MCF 10A (cell line): ENCODE measurements at regions of chr1 and their contacts with region 1.

Region 1: GRCh38 chr1:44652445-44653106 is 21.7 kb downstream of the TMEM53 start:
- DNase-seq: peak; percentile 74
- H3K4me3 Mint-ChIP-seq: no peak overlapping the region
- H3K27ac Mint-ChIP-seq: peak overlapping the region; percentile 43
- H3K4me1 Mint-ChIP-seq: no peaks in the 10 kb centered on the region
- H3K27me3 Mint-ChIP-seq: no peaks in the 10 kb centered on the region
- CTCF ChIP-seq: peak; percentile 97

Region 2: DNA sequence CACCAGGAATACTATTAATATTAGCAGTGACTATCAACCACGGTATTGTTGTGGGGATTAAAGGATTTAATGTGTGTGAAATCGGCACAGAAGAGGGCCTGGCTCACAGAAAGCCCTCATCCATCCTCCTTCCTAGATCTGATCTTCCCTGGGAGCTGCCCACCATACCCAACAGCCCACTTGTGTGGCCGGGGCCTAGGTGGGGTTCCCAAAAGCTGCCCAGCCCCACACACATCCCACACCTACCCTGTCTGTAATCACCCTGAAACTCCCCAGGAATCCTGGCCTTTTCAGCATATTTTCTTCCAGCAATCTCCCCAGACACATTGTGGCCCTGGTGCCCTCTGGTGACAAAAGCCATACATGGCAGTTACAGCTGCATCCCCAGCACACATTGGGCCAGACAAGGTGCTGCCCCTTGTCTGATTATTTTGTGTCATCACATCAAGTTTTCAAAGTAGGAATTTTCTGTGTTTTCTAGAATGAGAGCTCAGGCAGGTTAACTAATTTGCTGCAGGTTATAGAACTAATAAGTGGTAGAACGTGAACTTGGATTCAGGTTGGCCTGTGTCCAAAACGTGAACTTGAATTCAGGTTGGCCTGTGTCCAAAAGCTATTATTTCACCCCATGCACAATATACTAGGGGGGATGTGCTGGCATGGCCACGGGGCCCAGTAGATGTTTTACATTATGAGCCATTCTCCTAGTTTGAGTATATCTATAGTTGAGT is 616.0 kb before region 1 on chr1:
- CTCF ChIA-PET with region 1: interaction called, 16 read pairs
- POLR2A ChIA-PET with region 1: no interaction called
- intact Hi-C with region 1: no loop called
- DNase-seq: peak; percentile 85
- H3K4me3 Mint-ChIP-seq: no peak overlapping the region
- H3K27ac Mint-ChIP-seq: no peak overlapping the region
- H3K4me1 Mint-ChIP-seq: peaks cover 11% of the 10 kb centered on the region
- H3K27me3 Mint-ChIP-seq: no peaks in the 10 kb centered on the region
- CTCF ChIP-seq: peak; percentile 73

Region 3: GRCh38 chr1:44213222-44214112 is 439.1 kb before region 1 on chr1 and contains the start of gene DMAP1:
- CTCF ChIA-PET with region 1: interaction called, 70 read pairs
- POLR2A ChIA-PET with region 1: interaction called, 15 read pairs
- intact Hi-C with region 1: loop called (anchors 1 kb)
- DNase-seq: peak; percentile 80
- H3K4me3 Mint-ChIP-seq: peak within 1 kb of the TSS; percentile 82
- H3K27ac Mint-ChIP-seq: peak within 1 kb of the TSS; percentile 80
- H3K4me1 Mint-ChIP-seq: peaks cover 25% of the 10 kb centered on the region
- H3K27me3 Mint-ChIP-seq: no peaks in the 10 kb centered on the region
- CTCF ChIP-seq: no peak
- total RNA-seq, gene DMAP1: 36.6 and 38.5 TPM in 2 replicates

Region 4: GRCh38 chr1:44377925-44378784 is 274.4 kb before region 1 on chr1:
- CTCF ChIA-PET with region 1: interaction called, 10 read pairs
- POLR2A ChIA-PET with region 1: no interaction called
- intact Hi-C with region 1: loop called (anchors 1 kb)
- DNase-seq: peak; percentile 72
- H3K4me3 Mint-ChIP-seq: no peak overlapping the region
- H3K27ac Mint-ChIP-seq: no peak overlapping the region
- H3K4me1 Mint-ChIP-seq: no peaks in the 10 kb centered on the region
- H3K27me3 Mint-ChIP-seq: no peaks in the 10 kb centered on the region
- CTCF ChIP-seq: peak; percentile 72

Region 5: GRCh38 chr1:44511769-44512168 is 140.8 kb before region 1 on chr1:
- CTCF ChIA-PET with region 1: no interaction called
- POLR2A ChIA-PET with region 1: no interaction called
- intact Hi-C with region 1: no loop called
- DNase-seq: no peak
- H3K4me3 Mint-ChIP-seq: no peak overlapping the region
- H3K27ac Mint-ChIP-seq: peak overlapping the region; percentile 41
- H3K4me1 Mint-ChIP-seq: peaks cover 19% of the 10 kb centered on the region
- H3K27me3 Mint-ChIP-seq: no peaks in the 10 kb centered on the region
- CTCF ChIP-seq: no peak

Region 6: GRCh38 chr1:44631647-44632539 is 20.7 kb before region 1 on chr1:
- CTCF ChIA-PET with region 1: interaction called, 33 read pairs
- POLR2A ChIA-PET with region 1: interaction called, 6 read pairs
- intact Hi-C with region 1: no loop called
- DNase-seq: peak; percentile 87
- H3K4me3 Mint-ChIP-seq: peak overlapping the region; percentile 79
- H3K27ac Mint-ChIP-seq: peak overlapping the region; percentile 98
- H3K4me1 Mint-ChIP-seq: peaks cover 20% of the 10 kb centered on the region
- H3K27me3 Mint-ChIP-seq: no peaks in the 10 kb centered on the region
- CTCF ChIP-seq: no peak

Region 7: GRCh38 chr1:44664730-44665370 is 12.3 kb after region 1 on chr1:
- CTCF ChIA-PET with region 1: interaction called, 51 read pairs
- POLR2A ChIA-PET with region 1: no interaction called
- intact Hi-C with region 1: no loop called
- DNase-seq: no peak
- H3K4me3 Mint-ChIP-seq: no peak overlapping the region
- H3K27ac Mint-ChIP-seq: no peak overlapping the region
- H3K4me1 Mint-ChIP-seq: peaks cover 6% of the 10 kb centered on the region
- H3K27me3 Mint-ChIP-seq: no peaks in the 10 kb centered on the region
- CTCF ChIP-seq: no peak

Region 8: GRCh38 chr1:44707959-44708831 is 55.6 kb after region 1 on chr1:
- CTCF ChIA-PET with region 1: interaction called, 3 read pairs
- POLR2A ChIA-PET with region 1: no interaction called
- intact Hi-C with region 1: loop called (anchors 5 kb)
- DNase-seq: peak; percentile 75
- H3K4me3 Mint-ChIP-seq: no peak overlapping the region
- H3K27ac Mint-ChIP-seq: no peak overlapping the region
- H3K4me1 Mint-ChIP-seq: peaks cover 17% of the 10 kb centered on the region
- H3K27me3 Mint-ChIP-seq: peaks cover 14% of the 10 kb centered on the region
- CTCF ChIP-seq: peak; percentile 37

Region 9: GRCh38 chr1:45221716-45222115 is 569.1 kb after region 1 on chr1:
- CTCF ChIA-PET with region 1: no interaction called
- POLR2A ChIA-PET with region 1: no interaction called
- intact Hi-C with region 1: no loop called
- DNase-seq: peak; percentile 13
- H3K4me3 Mint-ChIP-seq: no peak overlapping the region
- H3K27ac Mint-ChIP-seq: no peak overlapping the region
- H3K4me1 Mint-ChIP-seq: no peaks in the 10 kb centered on the region
- H3K27me3 Mint-ChIP-seq: no peaks in the 10 kb centered on the region
- CTCF ChIP-seq: no peak